Activated CD4-positive, alpha-beta memory T cell treated with anti-CD3 and anti-CD28 coated beads for 36 hours (primary cell): ENCODE measurements at regions of chr5 and their contacts with region 1.

Region 1: DNA sequence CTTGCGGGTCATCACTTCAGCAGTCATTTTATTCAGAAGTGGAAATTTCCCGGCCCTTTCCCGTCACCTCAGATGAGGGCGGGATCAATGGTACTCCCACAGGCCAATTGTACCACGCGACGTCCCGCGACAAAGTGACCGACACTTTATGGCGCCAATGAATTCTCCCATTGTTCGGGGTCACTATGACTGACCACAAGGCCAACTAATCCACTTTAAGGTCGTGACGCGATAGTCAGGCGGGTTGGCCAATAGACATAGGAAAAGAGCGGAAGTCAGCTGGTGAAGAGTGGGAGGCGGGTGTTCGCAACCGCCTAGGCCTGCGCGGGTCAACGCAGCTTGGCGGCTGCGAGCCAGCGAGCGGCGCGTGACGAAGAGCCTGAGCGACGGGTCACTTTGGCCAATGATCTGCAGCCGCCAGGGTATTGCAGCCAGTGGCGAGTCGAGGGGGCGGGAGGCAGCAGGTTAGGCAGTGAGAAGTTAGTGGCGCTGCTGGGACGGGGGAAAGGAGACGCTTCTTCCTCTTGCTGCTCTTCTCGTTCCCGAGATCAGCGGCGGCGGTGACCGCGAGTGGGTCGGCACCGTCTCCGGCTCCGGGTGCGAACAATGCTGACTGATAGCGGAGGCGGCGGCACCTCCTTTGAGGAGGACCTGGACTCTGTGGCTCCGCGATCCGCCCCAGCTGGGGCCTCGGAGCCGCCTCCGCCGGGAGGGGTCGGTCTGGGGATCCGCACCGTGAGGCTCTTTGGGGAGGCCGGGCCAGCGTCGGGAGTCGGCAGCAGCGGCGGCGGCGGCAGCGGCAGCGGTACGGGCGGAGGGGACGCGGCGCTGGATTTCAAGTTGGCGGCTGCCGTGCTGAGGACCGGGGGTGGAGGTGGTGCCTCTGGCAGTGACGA is at the start of gene ANKHD1:
- DNase-seq: peak; percentile 99
- H3K4me3 Mint-ChIP-seq: no peak within 1 kb of the TSS
- H3K27ac Mint-ChIP-seq: no peak within 1 kb of the TSS
- H3K4me1 Mint-ChIP-seq: peaks cover 31% of the 10 kb centered on the region
- H3K27me3 Mint-ChIP-seq: no peaks in the 10 kb centered on the region
- total RNA-seq, gene ANKHD1: 102 to 105 TPM

Region 2: GRCh38 chr5:140131967-140132409 is 269.6 kb before region 1 on chr5:
- CTCF ChIA-PET with region 1: no interaction called
- POLR2A ChIA-PET with region 1: no interaction called
- intact Hi-C with region 1: no loop called
- DNase-seq: peak; percentile 38
- H3K4me3 Mint-ChIP-seq: no peak overlapping the region
- H3K27ac Mint-ChIP-seq: no peak overlapping the region
- H3K4me1 Mint-ChIP-seq: peaks cover 35% of the 10 kb centered on the region
- H3K27me3 Mint-ChIP-seq: no peaks in the 10 kb centered on the region

Region 3: DNA sequence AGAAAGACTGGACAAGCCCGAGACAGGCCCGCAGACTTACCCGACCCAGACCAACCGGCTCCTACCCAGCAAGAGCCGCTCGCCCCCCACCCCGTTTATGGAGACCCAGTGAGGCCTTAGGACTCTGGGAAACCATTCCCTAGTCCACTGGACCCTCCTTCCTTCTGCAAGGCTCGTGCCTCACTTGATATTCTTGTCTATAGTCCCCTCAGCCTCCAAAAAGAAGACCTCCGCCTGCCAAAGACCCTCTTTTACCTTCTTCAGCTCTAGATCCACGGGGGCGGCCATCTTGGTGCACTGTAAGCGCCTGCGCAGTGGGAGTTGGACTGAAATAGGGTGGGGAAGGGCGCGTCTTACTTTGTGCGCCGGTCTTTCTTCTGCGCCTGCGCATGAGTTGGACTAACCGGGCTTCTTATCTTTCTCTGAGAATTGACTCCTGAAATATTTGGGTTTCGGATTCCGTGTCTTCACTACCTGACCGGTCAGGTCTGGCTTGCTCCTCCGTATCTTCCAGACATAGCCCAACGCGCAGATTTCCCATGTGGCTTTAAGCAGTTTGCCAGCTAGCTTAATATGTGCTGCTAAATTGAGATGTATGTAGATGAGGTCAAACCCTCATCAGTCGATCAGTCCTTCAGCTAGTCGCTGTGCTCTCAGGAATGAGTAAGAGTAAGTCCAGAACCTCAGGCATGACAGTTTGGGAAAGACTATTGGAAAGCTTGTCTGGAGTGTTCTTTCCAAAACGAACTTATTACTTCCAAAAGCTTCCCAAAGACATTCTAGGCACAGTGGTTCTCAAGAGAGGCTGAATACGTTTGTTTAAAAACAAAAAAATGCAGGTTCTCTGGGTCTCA is 98.6 kb before region 1 on chr5 and contains the start of gene PFDN1:
- CTCF ChIA-PET with region 1: no interaction called
- POLR2A ChIA-PET with region 1: no interaction called
- intact Hi-C with region 1: loop called (anchors 1 kb)
- DNase-seq: peak; percentile 95
- H3K4me3 Mint-ChIP-seq: peak within 1 kb of the TSS; percentile 98
- H3K27ac Mint-ChIP-seq: peak within 1 kb of the TSS; percentile 85
- H3K4me1 Mint-ChIP-seq: peaks cover 26% of the 10 kb centered on the region
- H3K27me3 Mint-ChIP-seq: no peaks in the 10 kb centered on the region
- total RNA-seq, gene PFDN1: 50.1 to 54.6 TPM

Region 4: GRCh38 chr5:140420226-140420570 is 18.6 kb after region 1 on chr5:
- CTCF ChIA-PET with region 1: interaction called, 3 read pairs
- POLR2A ChIA-PET with region 1: interaction called, 5 read pairs
- intact Hi-C with region 1: loop called (anchors 2 kb)
- DNase-seq: no peak
- H3K4me3 Mint-ChIP-seq: no peak overlapping the region
- H3K27ac Mint-ChIP-seq: no peak overlapping the region
- H3K4me1 Mint-ChIP-seq: peaks cover 55% of the 10 kb centered on the region
- H3K27me3 Mint-ChIP-seq: no peaks in the 10 kb centered on the region

Region 5: GRCh38 chr5:140564196-140565023 is 162.8 kb after region 1 on chr5 and contains the starts of genes APBB3 and SLC35A4:
- CTCF ChIA-PET with region 1: interaction called, 3 read pairs
- POLR2A ChIA-PET with region 1: interaction called, 5 read pairs
- intact Hi-C with region 1: loop called (anchors 1 kb)
- DNase-seq: peak; percentile 98
- H3K4me3 Mint-ChIP-seq: peak within 1 kb of the TSS; percentile 91
- H3K27ac Mint-ChIP-seq: peak within 1 kb of the TSS; percentile 93
- H3K4me1 Mint-ChIP-seq: peaks cover 47% of the 10 kb centered on the region
- H3K27me3 Mint-ChIP-seq: no peaks in the 10 kb centered on the region
- total RNA-seq, gene APBB3: 16.3 to 16.8 TPM
- total RNA-seq, gene SLC35A4: 68.7 to 69.7 TPM

Region 6: DNA sequence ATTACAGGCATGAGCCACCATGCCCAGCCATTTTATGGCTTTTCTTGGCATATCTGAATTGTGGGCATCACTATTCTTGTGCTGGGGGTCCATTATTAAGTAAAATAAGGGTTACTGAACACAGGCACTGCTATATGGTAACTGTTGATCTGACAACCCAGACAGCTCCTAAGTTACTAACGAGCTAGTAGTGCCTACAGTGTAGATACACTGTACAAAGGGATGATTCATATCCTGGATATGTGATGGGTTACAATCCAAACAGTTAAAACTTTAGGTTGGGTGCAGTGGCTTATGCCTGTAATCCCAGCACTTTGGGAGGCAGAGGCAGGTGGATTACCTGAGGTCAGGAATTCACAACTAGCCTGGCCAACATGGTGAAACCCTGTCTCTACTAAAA is 227.1 kb after region 1 on chr5:
- CTCF ChIA-PET with region 1: no interaction called
- POLR2A ChIA-PET with region 1: no interaction called
- intact Hi-C with region 1: no loop called
- DNase-seq: no peak
- H3K4me3 Mint-ChIP-seq: no peak overlapping the region
- H3K27ac Mint-ChIP-seq: no peak overlapping the region
- H3K4me1 Mint-ChIP-seq: peaks cover 10% of the 10 kb centered on the region
- H3K27me3 Mint-ChIP-seq: peaks cover 2% of the 10 kb centered on the region

Region 7: GRCh38 chr5:140664359-140665119 is 262.9 kb after region 1 on chr5 and contains the start of gene WDR55:
- CTCF ChIA-PET with region 1: no interaction called
- POLR2A ChIA-PET with region 1: interaction called, 5 read pairs
- intact Hi-C with region 1: loop called (anchors 1 kb)
- DNase-seq: peak; percentile 98
- H3K4me3 Mint-ChIP-seq: peak within 1 kb of the TSS; percentile 99
- H3K27ac Mint-ChIP-seq: peak within 1 kb of the TSS; percentile 94
- H3K4me1 Mint-ChIP-seq: peaks cover 27% of the 10 kb centered on the region
- H3K27me3 Mint-ChIP-seq: no peaks in the 10 kb centered on the region
- total RNA-seq, gene WDR55: 30.4 to 32.1 TPM

Region 8: DNA sequence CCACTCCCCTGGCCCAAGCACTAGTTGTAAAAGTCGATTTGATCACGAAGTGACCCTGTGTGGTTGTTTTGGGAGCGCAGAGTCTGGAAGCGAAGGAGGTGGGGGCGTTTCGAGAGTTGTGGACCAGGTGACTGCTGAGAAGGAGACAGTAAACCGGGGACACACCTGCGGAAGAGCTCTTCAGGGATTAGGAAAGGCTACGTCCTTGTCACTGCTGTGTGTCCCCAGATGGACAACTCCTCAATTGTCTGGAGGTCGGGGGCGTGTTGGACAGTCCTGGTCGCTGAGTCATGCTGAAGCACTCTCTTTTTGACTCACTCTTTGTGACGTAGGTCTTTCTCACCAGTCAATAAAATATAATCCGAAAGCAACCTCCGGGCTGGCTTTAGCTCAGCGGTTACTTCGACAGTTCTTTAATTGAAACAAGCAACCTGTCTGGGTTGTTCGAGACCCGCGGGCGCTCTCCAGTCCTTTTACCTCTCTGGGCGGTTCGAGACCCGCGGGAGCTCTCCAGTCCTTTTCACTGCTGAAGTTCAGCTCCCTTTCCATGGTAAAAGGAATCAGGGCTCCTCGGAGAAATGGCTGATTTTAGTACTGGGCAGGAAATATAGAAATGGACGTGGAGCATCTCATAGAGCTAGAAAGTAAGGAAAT is 309.4 kb after region 1 on chr5:
- CTCF ChIA-PET with region 1: interaction called, 5 read pairs
- POLR2A ChIA-PET with region 1: interaction called, 3 read pairs
- intact Hi-C with region 1: loop called (anchors 1 kb)
- DNase-seq: peak; percentile 93
- H3K4me3 Mint-ChIP-seq: peak overlapping the region; percentile 89
- H3K27ac Mint-ChIP-seq: peak overlapping the region; percentile 89
- H3K4me1 Mint-ChIP-seq: peaks cover 12% of the 10 kb centered on the region
- H3K27me3 Mint-ChIP-seq: no peaks in the 10 kb centered on the region